ENCODE measurements at regions of chr1 and their contacts with region 1.

Region 1: DNA sequence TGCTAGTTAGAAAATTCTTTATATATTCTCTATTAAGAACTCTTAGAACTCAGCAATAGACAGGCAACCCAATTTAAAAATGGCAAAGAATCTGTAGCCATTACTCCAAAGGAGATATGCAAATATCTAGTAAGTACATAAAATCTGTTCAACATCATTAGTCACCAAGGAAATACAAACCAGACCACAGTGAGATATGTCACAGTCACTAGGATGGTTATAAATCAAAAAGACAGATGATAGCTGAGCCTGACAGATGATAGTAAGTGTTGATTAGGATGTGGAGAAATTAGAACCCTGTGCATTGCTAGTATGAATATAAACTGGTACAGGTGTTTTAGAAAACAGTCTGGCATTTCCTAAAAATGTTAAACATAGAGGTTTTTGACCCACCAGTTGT is 26.6 kb downstream of the SRSF11 start:
- DNase-seq: no peak
- H3K4me3 ChIP-seq: no peak overlapping the region
- H3K27ac ChIP-seq: no peak overlapping the region
- H3K4me1 ChIP-seq: no peaks in the 10 kb centered on the region
- CTCF ChIP-seq: no peak

Region 2: DNA sequence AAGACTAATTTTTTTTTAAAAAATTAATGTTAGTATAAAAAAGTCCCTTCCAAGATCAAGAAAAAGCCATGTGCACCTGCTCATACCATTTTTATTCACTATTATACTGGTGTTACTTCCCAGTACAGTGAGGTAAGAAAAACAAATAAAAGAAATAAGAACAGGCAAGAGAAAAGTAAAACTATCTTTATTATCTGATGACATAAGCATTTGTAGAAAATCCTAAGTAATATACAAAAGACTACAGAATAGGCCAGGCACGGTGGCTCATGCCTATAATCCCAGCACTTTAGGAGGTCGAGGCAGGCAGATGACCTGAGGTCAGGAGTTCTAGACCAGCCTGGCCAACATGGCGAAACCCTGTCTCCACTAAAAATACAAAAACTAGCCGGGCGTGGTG is 38.7 kb after region 1 on chr1:
- CTCF ChIA-PET with region 1: no interaction called
- POLR2A ChIA-PET with region 1: interaction called, 10 read pairs
- intact Hi-C with region 1: no loop called
- DNase-seq: no peak
- H3K4me3 ChIP-seq: no peak overlapping the region
- H3K27ac ChIP-seq: no peak overlapping the region
- H3K4me1 ChIP-seq: no peaks in the 10 kb centered on the region
- CTCF ChIP-seq: no peak

Region 3: DNA sequence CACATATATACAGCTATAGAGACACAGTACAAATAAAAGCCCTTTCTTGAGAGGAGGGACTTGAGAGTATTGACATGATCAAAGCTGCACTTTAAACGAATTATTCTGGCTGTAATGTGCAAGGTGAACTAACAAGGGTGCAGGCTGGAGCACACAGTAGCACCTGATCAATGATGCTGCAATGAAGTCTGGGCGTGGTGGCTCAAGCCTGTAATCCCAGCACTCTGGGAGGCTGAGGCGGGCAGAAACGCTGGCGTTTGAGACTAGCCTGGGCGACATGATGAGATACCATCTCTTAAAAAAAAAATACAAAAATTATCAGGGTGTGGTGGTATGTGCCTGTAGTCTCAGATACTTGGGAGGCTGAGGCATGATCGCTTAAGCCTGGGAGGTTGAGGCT is 149.2 kb after region 1 on chr1:
- CTCF ChIA-PET with region 1: no interaction called
- POLR2A ChIA-PET with region 1: no interaction called
- intact Hi-C with region 1: no loop called
- DNase-seq: no peak
- H3K4me3 ChIP-seq: no peak overlapping the region
- H3K27ac ChIP-seq: no peak overlapping the region
- H3K4me1 ChIP-seq: no peaks in the 10 kb centered on the region
- CTCF ChIP-seq: no peak

Region 4: DNA sequence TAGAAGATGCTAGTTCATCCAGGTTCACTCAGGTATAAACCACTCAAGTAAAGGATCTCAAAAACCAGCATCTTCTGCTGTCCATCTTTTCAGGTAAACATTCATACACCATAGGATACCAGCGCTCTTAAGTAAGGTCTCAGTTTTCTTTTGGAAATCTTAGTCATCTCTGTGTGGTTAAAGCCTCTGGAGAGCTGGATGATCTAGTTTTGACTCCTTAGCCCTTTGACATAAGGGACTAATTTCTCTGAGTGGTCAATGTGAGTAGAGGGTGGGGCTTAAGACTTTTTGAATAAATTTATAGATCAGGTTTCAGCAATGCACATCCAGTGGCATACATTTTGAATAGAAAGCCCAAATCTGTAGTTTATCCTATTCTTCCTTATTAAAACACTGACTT is 255.6 kb after region 1 on chr1:
- CTCF ChIA-PET with region 1: no interaction called
- POLR2A ChIA-PET with region 1: no interaction called
- intact Hi-C with region 1: no loop called
- DNase-seq: no peak
- H3K4me3 ChIP-seq: no peak overlapping the region
- H3K27ac ChIP-seq: no peak overlapping the region
- H3K4me1 ChIP-seq: no peaks in the 10 kb centered on the region
- CTCF ChIP-seq: no peak

Region 5: GRCh38 chr1:71068325-71069240 is 820.8 kb after region 1 on chr1:
- CTCF ChIA-PET with region 1: no interaction called
- POLR2A ChIA-PET with region 1: no interaction called
- intact Hi-C with region 1: loop called (anchors 10 kb)
- DNase-seq: peak; percentile 28
- H3K4me3 ChIP-seq: no peak overlapping the region
- H3K27ac ChIP-seq: peak overlapping the region; percentile 19
- H3K4me1 ChIP-seq: peaks cover 11% of the 10 kb centered on the region
- CTCF ChIP-seq: no peak

Measured in OCI-LY7 (cell line).